ENCODE measurements at regions of chr16 and their contacts with region 1.

Region 1: GRCh38 chr16:54286090-54286993 is at the start of gene IRX3:
- DNase-seq: peak; percentile 71 to 91 (median 90)
- ATAC-seq: peak; percentile 78
- H3K4me3 ChIP-seq: peak within 1 kb of the TSS; percentile 47 to 53
- H3K27ac ChIP-seq: peak within 1 kb of the TSS; percentile 75 to 87
- H3K4me1 ChIP-seq: peaks cover 0 to 39% of the 10 kb centered on the region in 2 donors
- H3K27me3 ChIP-seq: peaks cover 69 to 100% of the 10 kb centered on the region in 2 donors
- CTCF ChIP-seq: no peak
- polyA plus RNA-seq, gene IRX3: 46.9 to 76.2 (median 70.9) TPM

Region 2: DNA sequence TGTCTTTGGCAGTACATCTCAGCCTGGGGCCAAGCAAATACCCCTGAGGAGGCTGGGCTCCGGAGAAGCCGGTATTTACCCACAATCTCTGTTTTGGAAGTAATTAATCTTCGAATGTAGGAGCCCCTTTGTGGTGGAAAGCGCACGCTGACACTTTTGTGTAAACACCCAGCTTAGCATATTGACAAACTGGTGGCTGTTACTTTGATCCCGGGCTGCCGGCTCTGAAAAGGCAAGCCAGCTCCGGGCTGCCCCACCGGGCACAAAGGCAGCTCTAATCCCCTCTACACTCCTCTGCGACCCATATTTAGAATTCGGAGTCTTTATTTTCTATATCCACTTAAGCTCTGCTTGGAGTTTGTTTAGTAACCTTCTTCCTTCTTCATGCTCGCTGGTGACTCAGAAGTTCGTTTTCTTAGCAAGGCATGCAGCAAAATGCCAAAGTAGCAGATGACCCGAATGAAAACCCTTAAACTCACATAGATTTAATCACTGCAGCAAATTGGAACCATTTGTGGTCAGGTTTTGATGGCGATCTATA is 144.2 kb after region 1 on chr16:
- intact Hi-C with region 1: no loop called
- DNase-seq: no peak
- ATAC-seq: peak; percentile 54
- H3K4me3 ChIP-seq: no peak overlapping the region
- H3K27ac ChIP-seq: peak overlapping the region; percentile 39 to 53
- H3K4me1 ChIP-seq: peaks cover 0 to 8% of the 10 kb centered on the region in 2 donors
- H3K27me3 ChIP-seq: peaks cover 5 to 49% of the 10 kb centered on the region in 2 donors
- CTCF ChIP-seq: no peak

Region 3: GRCh38 chr16:54929090-54930004 is 643.0 kb after region 1 on chr16:
- intact Hi-C with region 1: loop called (anchors 2 to 10 kb)
- DNase-seq: peak; percentile 95 to 99 (median 98)
- ATAC-seq: peak; percentile 87
- H3K4me3 ChIP-seq: peak overlapping the region; percentile 52 to 54
- H3K27ac ChIP-seq: peak overlapping the region; percentile 79 to 91
- H3K4me1 ChIP-seq: peaks cover 0 to 22% of the 10 kb centered on the region in 2 donors
- H3K27me3 ChIP-seq: peaks cover 71 to 98% of the 10 kb centered on the region in 2 donors
- CTCF ChIP-seq: no peak

Region 4: DNA sequence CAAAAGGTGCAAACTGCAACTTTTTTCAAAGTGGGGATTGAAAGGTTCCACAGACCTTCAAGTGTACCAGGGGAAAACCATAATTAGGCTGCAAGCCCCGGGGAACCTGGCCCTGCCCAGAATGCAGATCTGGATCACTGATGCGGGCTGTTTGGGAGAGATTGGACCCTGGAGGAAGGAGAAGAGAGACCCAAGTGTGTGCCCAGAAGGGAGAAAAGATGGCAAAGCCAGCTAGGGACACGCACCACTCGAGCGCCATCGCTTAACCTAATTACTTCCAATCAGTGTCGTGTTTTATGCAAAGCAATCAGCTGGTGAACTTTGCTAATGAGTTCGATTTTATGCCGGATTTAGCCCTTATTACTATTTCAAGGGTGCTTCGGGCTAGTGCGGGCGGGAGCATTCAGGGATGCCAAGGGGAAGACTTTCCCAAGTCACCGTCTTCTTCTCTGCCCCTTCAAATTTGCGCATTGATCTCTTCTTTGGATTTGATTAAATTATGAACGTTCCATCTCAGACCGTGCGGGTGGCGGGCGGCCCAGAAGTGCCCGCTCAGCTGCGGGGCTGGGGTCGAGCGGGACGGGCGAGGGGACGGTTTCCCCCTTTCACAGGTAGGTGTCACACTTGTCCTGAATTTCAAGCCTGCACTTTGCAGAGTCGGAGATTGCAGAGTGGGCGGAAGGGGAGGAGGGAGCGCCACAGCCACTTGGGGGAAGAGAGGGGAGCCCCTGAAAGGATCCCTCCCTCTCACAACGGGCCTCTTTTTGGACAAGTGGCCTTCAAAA is 648.3 kb after region 1 on chr16:
- intact Hi-C with region 1: loop called (anchors 2 to 10 kb)
- DNase-seq: peak in 3 of 4 donors; percentile 47 to 69 (median 64)
- ATAC-seq: peak; percentile 9
- H3K4me3 ChIP-seq: peak overlapping the region; percentile 19 to 54
- H3K27ac ChIP-seq: peak overlapping the region; percentile 75 to 86
- H3K4me1 ChIP-seq: peaks cover 4 to 46% of the 10 kb centered on the region in 2 donors
- H3K27me3 ChIP-seq: peaks cover 85 to 100% of the 10 kb centered on the region in 2 donors
- CTCF ChIP-seq: no peak

Measured in left lung (tissue), 14 donors.